Right ventricle myocardium inferior (tissue), 1 donor: ENCODE measurements at regions of chr22 and their contacts with region 1.

Region 1: DNA sequence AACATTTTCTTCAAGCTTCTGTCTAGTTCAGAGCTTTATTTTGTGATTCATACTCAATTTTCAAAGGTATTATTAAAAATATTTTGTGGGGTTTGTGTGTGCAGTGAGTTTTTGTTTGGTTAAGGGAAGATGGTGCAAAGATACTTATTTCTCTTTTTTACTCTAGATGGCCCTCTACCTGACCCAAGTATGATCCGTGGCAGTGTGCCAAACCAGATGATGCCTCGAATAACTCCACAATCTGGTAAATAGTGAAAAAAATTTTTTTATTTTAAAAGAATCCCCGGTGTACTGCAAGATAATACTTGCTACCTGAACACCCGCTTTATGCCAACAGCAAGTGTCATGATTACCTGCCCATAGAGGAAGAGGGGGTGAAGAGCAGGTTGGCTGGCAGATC is 54.2 kb downstream of the EP300 start:
- DNase-seq: no peak
- ATAC-seq: no peak

Region 2: DNA sequence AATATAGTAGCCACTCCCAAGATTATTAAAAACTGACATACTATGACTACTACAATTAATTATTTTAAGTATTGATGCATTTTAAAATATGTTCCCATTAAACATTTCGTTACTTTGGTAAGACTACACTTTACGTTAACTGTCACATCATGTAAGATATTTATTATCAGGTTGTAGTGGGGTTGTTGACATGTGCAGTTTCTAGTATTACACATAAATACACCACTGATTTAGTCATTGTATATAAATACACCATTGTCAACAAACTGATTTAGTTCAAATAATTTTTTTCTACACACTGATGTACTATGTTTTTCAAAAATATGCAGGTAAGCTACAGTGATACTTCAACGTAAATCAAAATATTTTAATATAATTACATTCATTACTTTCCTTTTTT is 301.6 kb before region 1 on chr22:
- intact Hi-C with region 1: loop called (anchors 10 kb)
- DNase-seq: no peak
- ATAC-seq: no peak

Region 3: GRCh38 chr22:40922484-40923303 is 223.9 kb before region 1 on chr22:
- intact Hi-C with region 1: loop called (anchors 10 kb)
- DNase-seq: no peak
- ATAC-seq: peak; percentile 67

Region 4: GRCh38 chr22:41217553-41218157 is 71.1 kb after region 1 on chr22:
- intact Hi-C with region 1: no loop called
- DNase-seq: peak; percentile 89
- ATAC-seq: peak; percentile 90